ENCODE measurements at regions of chrX and their contacts with region 1.

Region 1: GRCh38 chrX:107776649-107777535 is 641 bp upstream of the NCBP2L start:
- DNase-seq: peak in 5 of 6 donors; percentile 70 to 84 (median 78)
- ATAC-seq: peak; percentile 55 to 84 (median 73)
- H3K4me3 ChIP-seq: peak overlapping the region in 2 of 4 donors; percentile 49 to 54
- H3K27ac ChIP-seq: peak overlapping the region in 2 of 4 donors; percentile 5 to 73
- H3K4me1 ChIP-seq: no peaks in the 10 kb centered on the region
- H3K27me3 ChIP-seq: peaks cover 0 to 8% (median 0%) of the 10 kb centered on the region in 4 donors
- CTCF ChIP-seq: peak; percentile 73 to 82 (median 78)

Region 2: DNA sequence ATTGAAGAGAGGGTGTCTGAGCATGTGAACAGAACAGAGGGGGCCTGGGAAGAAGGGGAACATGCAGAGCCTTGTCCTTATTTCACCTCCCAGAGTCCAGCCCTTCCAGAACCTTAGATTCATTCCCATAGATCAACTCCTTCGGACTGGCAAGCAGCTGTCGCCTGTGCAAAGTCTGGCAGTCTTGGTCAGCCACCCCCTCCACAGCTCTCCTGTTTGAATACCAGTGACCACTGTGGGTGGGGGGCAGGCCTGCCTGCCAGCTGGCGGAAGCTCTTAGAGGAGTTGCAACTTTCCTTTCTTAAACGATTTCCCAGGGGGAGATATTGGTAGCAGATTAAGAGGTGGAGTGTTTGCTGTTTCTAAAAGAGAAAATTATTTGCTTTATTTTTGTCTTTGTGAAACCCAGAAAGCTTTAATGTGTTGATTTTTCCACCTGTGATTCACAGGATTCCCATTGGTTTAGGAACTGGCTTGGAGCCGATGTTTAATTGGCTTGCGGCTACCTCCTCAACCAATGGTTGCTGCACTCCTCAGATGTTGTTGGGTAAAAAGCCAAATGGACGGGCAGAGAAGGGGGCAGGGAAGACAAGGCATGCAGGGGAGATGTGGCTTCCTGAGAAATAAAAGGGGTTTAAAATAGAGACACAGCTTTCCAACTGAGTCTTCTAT is 210.8 kb before region 1 on chrX:
- intact Hi-C with region 1: no loop called
- DNase-seq: peak in 4 of 6 donors; percentile 30 to 51 (median 42)
- ATAC-seq: peak; percentile 88 to 97 (median 95)
- H3K4me3 ChIP-seq: no peak overlapping the region
- H3K27ac ChIP-seq: peak overlapping the region in 2 of 4 donors; percentile 30 to 55
- H3K4me1 ChIP-seq: no peaks in the 10 kb centered on the region
- H3K27me3 ChIP-seq: no peaks in the 10 kb centered on the region
- CTCF ChIP-seq: no peak

Region 3: DNA sequence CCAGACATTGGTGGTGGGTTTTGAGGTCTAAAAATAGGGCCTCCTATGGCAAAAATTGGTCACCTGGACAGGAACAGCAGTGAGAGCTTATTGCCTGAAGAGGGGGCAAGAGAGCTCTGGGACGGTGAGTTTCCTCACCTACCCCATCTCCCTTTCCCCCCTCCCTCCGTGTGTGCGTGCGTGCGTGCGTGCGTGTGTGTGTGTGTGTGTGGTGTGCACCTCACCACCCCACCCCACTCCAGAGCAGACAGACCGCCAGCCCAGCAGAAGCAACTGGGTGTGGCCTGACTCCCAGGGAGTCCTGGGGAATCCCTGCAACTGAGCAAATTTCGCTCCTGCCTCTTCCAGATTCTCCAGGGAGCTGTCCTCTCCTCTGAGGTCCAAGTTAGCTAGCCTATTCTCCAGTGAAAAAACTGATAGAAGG is 103.9 kb before region 1 on chrX:
- intact Hi-C with region 1: loop called in 1 of 3 experiments (anchors 10 kb)
- DNase-seq: peak in 5 of 6 donors; percentile 46 to 61 (median 55)
- ATAC-seq: peak; percentile 38 to 70 (median 66)
- H3K4me3 ChIP-seq: no peak overlapping the region
- H3K27ac ChIP-seq: peak overlapping the region in 2 of 4 donors; percentile 37 to 58
- H3K4me1 ChIP-seq: peaks cover 0 to 3% (median 0%) of the 10 kb centered on the region in 3 donors
- H3K27me3 ChIP-seq: no peaks in the 10 kb centered on the region
- CTCF ChIP-seq: peak; percentile 18 to 56 (median 40)

Measured in pancreas (tissue), 10 donors.